ENCODE measurements at regions of chr3 and their contacts with region 1.

Region 1: GRCh38 chr3:160941885-160942494 is 163.2 kb downstream of the B3GALNT1 start:
- DNase-seq: peak; percentile 61
- ATAC-seq: peak; percentile 84
- H3K4me3 ChIP-seq: no peak overlapping the region
- H3K27ac ChIP-seq: no peak overlapping the region
- H3K4me1 ChIP-seq: no peaks in the 10 kb centered on the region
- H3K27me3 ChIP-seq: no peaks in the 10 kb centered on the region
- CTCF ChIP-seq: peak; percentile 79
- POLR2A ChIP-seq: no peak
- RAD21 ChIP-seq: peak; percentile 73

Region 2: DNA sequence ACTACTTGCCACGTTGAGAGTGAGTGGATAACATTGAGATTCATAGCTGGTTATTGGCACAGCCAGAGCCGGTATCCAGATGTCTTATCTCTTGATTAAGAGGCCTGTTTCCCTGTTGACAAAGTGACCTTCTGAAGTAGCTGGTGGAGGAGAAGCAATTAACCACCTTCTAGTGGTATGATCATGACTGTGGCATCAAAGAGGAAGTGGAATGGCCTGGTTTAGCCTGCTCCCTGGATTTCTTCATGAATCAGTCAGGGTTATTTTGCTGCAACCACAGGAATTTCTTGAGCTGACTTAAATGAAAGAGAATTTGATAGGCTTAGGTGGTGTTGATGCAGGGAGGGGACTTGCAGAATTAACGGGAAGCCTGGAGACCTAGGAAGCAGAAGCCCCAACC is 1741.8 kb before region 1 on chr3:
- CTCF ChIA-PET with region 1: no interaction called
- POLR2A ChIA-PET with region 1: no interaction called
- dilution Hi-C with region 1: no loop called
- in situ Hi-C with region 1: no loop called
- intact Hi-C with region 1: no loop called
- DNase-seq: no peak
- ATAC-seq: no peak
- H3K4me3 ChIP-seq: no peak overlapping the region
- H3K27ac ChIP-seq: no peak overlapping the region
- H3K4me1 ChIP-seq: no peaks in the 10 kb centered on the region
- H3K27me3 ChIP-seq: no peaks in the 10 kb centered on the region; the same call in 1 of the 2 replicates
- CTCF ChIP-seq: no peak
- POLR2A ChIP-seq: no peak
- RAD21 ChIP-seq: no peak

Region 3: DNA sequence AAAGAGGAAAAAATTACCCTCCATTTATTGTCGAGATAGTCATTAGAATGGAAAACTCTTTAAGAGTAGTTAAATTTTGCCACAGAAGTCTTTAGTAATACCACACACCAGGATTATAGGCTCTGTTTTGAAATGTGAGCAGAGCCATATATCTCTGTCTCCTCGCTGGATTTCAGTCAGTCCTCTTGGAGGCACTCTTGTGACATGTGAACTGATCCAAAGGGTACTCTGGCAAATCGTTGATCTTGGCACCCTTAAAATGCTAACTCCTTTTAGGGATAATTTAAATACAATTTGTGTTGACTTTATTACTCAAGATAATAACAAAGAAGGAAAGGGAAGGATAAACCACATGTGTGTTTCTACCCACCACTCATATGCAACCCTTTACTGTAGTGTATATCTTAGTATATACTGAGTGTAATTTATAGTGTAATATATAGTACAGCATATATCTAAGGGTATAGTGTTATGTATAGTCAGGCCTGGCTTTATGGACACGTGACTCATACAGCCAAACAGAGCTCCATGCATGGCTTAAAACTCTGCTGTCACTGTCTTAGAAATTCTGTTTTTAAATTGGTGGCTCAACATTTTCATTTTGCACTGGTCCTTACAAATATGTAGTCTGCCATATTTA is 364.3 kb before region 1 on chr3:
- CTCF ChIA-PET with region 1: no interaction called
- POLR2A ChIA-PET with region 1: no interaction called
- dilution Hi-C with region 1: no loop called
- in situ Hi-C with region 1: no loop called
- intact Hi-C with region 1: loop called (anchors 5 kb)
- DNase-seq: peak; percentile 21
- ATAC-seq: peak; percentile 51
- H3K4me3 ChIP-seq: no peak overlapping the region
- H3K27ac ChIP-seq: no peak overlapping the region
- H3K4me1 ChIP-seq: no peaks in the 10 kb centered on the region
- H3K27me3 ChIP-seq: peaks cover 2% of the 10 kb centered on the region
- CTCF ChIP-seq: 0 out of 2 replicates have a peak, but pooled peaks have one; percentile 12
- POLR2A ChIP-seq: no peak
- RAD21 ChIP-seq: 0 out of 2 replicates have a peak, but pooled peaks have one; percentile 10

Region 4: GRCh38 chr3:160686955-160687535 is 254.9 kb before region 1 on chr3:
- CTCF ChIA-PET with region 1: no interaction called
- POLR2A ChIA-PET with region 1: interaction called, 3 read pairs
- dilution Hi-C with region 1: no loop called
- in situ Hi-C with region 1: no loop called
- intact Hi-C with region 1: loop called (anchors 1 kb)
- DNase-seq: peak; percentile 24
- ATAC-seq: peak; percentile 62
- H3K4me3 ChIP-seq: no peak overlapping the region
- H3K27ac ChIP-seq: no peak overlapping the region
- H3K4me1 ChIP-seq: no peaks in the 10 kb centered on the region
- H3K27me3 ChIP-seq: no peaks in the 10 kb centered on the region
- CTCF ChIP-seq: peak; percentile 45
- POLR2A ChIP-seq: no peak
- RAD21 ChIP-seq: peak; percentile 40

Region 5: DNA sequence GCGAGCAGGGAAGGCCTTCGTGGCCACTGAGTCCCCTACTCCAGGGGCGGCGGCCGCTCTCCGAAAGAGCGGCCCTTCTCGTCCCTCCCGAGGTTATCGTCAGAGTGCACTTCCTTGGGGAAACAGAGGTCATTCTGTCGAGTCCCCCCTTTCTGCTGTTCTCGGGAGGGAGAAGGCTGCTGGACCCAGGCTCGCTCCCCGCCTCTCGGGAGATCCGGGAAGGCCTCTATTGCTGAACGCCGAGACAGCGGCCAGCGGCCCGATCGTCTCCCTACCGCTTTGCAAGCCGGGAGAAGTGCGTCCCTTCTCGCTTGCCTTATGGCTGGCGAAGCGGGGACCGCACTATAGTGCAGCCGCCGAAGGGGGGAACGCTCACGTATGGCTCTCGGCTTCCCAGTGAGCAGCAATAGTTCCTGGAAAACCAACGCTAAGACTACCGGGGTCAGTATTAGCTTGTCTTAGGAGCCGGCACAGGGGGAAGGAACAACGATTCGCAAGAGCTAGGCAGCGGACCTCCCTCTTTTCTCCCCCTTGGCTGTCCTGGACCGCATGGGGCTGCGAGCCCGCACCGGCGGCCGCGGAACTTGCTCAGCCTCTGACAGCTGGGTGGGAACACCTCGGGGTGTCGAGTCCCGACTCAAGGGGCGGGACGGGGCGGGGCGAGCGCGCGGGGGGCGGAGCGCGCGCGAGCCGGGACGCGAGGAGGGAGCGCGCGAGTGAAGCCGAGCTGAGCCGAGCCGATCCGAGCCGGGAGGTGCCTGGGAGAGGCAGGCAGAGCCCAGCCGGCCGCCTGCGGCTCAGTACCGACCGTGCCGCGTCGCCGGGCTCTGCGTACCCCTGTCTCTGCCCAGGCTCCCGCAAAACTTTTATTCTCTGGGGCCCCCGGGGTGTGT is 186.9 kb before region 1 on chr3:
- CTCF ChIA-PET with region 1: no interaction called
- POLR2A ChIA-PET with region 1: no interaction called
- dilution Hi-C with region 1: no loop called
- in situ Hi-C with region 1: no loop called
- intact Hi-C with region 1: loop called (anchors 5 kb)
- DNase-seq: peak; percentile 88
- ATAC-seq: peak; percentile 93
- H3K4me3 ChIP-seq: peak overlapping the region; percentile 61
- H3K27ac ChIP-seq: peak overlapping the region; percentile 48
- H3K4me1 ChIP-seq: no peaks in the 10 kb centered on the region
- H3K27me3 ChIP-seq: peaks cover 12% of the 10 kb centered on the region
- CTCF ChIP-seq: no peak
- POLR2A ChIP-seq: peak; percentile 49; the same call in 1 of the 2 replicates
- RAD21 ChIP-seq: no peak

Region 6: DNA sequence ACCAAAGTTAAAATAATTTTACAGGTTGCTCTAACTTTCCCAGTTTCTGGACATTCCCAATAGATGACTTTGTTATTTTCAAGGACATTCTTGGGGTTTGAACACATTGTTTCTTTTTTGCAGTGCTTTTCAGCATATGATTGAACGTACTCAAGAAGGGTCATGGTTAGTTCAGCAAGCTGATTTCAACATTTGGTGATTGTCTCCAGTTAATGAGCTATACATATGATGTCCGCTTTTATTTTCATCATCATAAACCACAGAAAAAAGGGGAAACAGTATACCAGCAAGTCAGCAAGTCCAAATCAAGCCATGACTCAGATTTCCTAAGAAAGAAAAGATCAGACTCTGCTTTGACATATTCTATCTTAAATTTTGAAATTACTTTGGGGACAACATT is 93.7 kb after region 1 on chr3:
- CTCF ChIA-PET with region 1: no interaction called
- POLR2A ChIA-PET with region 1: no interaction called
- dilution Hi-C with region 1: no loop called
- in situ Hi-C with region 1: no loop called
- intact Hi-C with region 1: no loop called
- DNase-seq: no peak
- ATAC-seq: no peak
- H3K4me3 ChIP-seq: no peak overlapping the region
- H3K27ac ChIP-seq: no peak overlapping the region
- H3K4me1 ChIP-seq: no peaks in the 10 kb centered on the region
- H3K27me3 ChIP-seq: no peaks in the 10 kb centered on the region
- CTCF ChIP-seq: no peak
- POLR2A ChIP-seq: no peak
- RAD21 ChIP-seq: no peak

Region 7: GRCh38 chr3:161274719-161275298 is 332.8 kb after region 1 on chr3:
- CTCF ChIA-PET with region 1: interaction called, 3 read pairs
- POLR2A ChIA-PET with region 1: no interaction called
- dilution Hi-C with region 1: no loop called
- in situ Hi-C with region 1: no loop called
- intact Hi-C with region 1: loop called (anchors 5 kb)
- DNase-seq: peak; percentile 63
- ATAC-seq: peak; percentile 67
- H3K4me3 ChIP-seq: no peak overlapping the region
- H3K27ac ChIP-seq: no peak overlapping the region
- H3K4me1 ChIP-seq: peaks cover 2% of the 10 kb centered on the region; the same call in 1 of the 2 replicates
- H3K27me3 ChIP-seq: no peaks in the 10 kb centered on the region
- CTCF ChIP-seq: peak; percentile 75
- POLR2A ChIP-seq: no peak
- RAD21 ChIP-seq: peak; percentile 66